Heart left ventricle (tissue), 16 donors: ENCODE measurements at regions of chr12 and their contacts with region 1.

Region 1: DNA sequence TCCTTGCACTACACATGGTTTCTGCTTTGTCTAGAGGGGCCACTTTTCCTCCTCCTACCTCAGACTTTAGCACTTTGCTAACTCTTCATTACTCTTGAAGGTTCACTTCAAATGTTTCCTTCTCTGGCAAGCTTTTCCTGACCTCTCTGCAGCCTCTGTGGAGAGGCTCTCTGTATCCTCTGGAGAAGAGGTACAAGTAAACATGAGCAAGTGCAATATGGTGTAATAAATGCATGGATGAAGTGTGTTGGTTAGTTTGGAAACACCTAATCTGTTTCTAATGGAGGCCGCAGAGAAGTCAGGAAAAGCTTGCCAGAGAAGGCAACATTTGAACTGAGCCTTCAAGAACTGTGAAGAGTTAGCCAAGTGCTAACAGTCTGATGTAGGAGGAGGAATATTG is 329.3 kb downstream of the GRIN2B start:
- DNase-seq: no peak
- ATAC-seq: no peak
- H3K4me3 ChIP-seq: no peak overlapping the region
- H3K27ac ChIP-seq: no peak overlapping the region
- H3K4me1 ChIP-seq: no peaks in the 10 kb centered on the region
- H3K27me3 ChIP-seq: no peaks in the 10 kb centered on the region
- CTCF ChIP-seq: no peak
- POLR2A ChIP-seq: no peak

Region 2: GRCh38 chr12:13278249-13278787 is 373.8 kb before region 1 on chr12:
- intact Hi-C with region 1: loop called in 1 of 10 experiments (anchors 10 kb)
- DNase-seq: peak; percentile 57 to 87 (median 71)
- ATAC-seq: peak; percentile 91 to 98 (median 93)
- H3K4me3 ChIP-seq: peak overlapping the region in 2 of 12 donors; percentile 6 to 22
- H3K27ac ChIP-seq: no peak overlapping the region
- H3K4me1 ChIP-seq: peaks cover 0 to 10% (median 5%) of the 10 kb centered on the region in 12 donors
- H3K27me3 ChIP-seq: peaks cover 0 to 33% (median 0%) of the 10 kb centered on the region in 9 donors
- CTCF ChIP-seq: peak; percentile 97 to 99 (median 98)
- POLR2A ChIP-seq: no peak